Ascending aorta (tissue), 2 donors: ENCODE measurements at regions of chr6 and their contacts with region 1.

Region 1: GRCh38 chr6:12011276-12012076 is 636 bp upstream of the HIVEP1 start:
- DNase-seq: peak; percentile 91 to 99
- H3K4me3 ChIP-seq: peak overlapping the region; percentile 85 to 97
- H3K27ac ChIP-seq: peak overlapping the region; percentile 98 to 99
- H3K4me1 ChIP-seq: peaks cover 6 to 12% of the 10 kb centered on the region in 2 donors
- H3K27me3 ChIP-seq: no peaks in the 10 kb centered on the region
- CTCF ChIP-seq: no peak

Region 2: GRCh38 chr6:11537229-11538051 is 474.0 kb before region 1 on chr6 and contains the start of gene TMEM170B:
- intact Hi-C with region 1: loop called (anchors 5 kb)
- DNase-seq: peak; percentile 67 to 94
- H3K4me3 ChIP-seq: peak within 1 kb of the TSS; percentile 94 to 96
- H3K27ac ChIP-seq: peak within 1 kb of the TSS; percentile 64 to 82
- H3K4me1 ChIP-seq: peaks cover 0 to 4% of the 10 kb centered on the region in 2 donors
- H3K27me3 ChIP-seq: no peaks in the 10 kb centered on the region
- CTCF ChIP-seq: no peak
- total RNA-seq, gene TMEM170B: 0.53 TPM

Region 3: DNA sequence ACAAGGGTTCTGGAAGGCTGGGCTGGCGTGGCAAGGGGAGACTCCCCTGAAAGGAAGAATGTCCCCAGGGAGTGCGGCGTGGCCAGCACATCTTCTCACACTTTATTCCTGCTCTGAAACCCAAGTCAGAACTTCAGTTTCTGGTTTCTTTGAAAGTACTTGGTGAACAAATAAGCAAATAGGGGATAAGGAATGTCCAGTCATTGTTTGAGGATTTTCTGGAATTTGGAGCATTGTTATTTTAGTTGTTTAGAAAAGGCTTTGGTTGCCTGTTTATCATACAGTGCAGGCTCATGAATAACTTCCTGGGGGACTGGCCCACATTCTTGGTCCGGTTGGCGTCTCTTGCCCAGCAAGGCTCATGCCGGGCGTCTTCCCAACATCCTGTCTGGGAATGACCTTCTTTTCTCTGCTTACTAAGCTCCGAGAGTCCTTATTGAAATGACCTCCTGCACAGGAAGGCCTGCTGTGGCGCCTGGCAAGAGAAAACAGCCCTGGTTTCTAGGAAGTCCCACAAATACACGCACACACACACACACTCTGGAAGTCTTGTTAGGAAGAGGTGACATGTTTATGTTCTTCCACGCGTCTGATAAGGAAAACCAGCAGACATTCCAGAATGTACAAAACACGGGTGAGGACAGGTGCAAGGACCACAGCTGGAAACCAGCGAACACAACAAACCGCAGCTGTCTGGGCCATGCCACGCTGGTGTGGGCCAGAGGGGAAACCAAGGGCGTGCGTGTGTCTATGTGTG is 402.0 kb before region 1 on chr6:
- intact Hi-C with region 1: loop called (anchors 5 kb)
- DNase-seq: peak; percentile 25 to 90
- H3K4me3 ChIP-seq: peak overlapping the region in 1 of 2 donors; percentile 8
- H3K27ac ChIP-seq: peak overlapping the region; percentile 65 to 79
- H3K4me1 ChIP-seq: peaks cover 12 to 48% of the 10 kb centered on the region in 2 donors
- H3K27me3 ChIP-seq: no peaks in the 10 kb centered on the region
- CTCF ChIP-seq: no peak

Region 4: DNA sequence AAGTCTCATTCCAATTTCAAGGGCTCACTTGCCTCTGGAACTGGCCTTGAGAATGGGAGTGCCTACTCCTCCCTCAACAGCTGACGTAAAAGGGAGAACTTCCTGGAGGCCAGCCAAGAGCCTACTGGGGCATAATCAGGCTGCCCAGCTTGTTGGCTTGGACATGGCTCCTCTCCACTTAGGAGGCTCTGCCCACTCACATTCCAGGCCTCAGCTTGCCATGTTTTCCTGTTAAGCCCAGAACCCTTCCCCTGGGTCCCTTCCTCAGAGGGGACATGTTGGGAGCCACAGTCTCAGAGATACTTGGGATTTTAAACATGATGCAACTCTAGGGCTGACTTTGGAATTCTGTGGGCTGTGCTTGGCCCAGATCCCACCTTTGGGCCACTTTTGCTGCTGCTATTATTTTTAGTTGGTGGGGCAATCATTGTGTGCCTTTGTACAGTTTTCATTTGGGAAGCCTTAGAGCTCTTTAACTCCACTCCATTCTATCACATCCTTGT is 201.4 kb before region 1 on chr6:
- intact Hi-C with region 1: loop called (anchors 5 kb)
- DNase-seq: peak; percentile 15 to 91
- H3K4me3 ChIP-seq: no peak overlapping the region
- H3K27ac ChIP-seq: peak overlapping the region; percentile 66 to 74
- H3K4me1 ChIP-seq: peaks cover 0 to 11% of the 10 kb centered on the region in 2 donors
- H3K27me3 ChIP-seq: no peaks in the 10 kb centered on the region
- CTCF ChIP-seq: no peak

Region 5: GRCh38 chr6:12241493-12242175 is 230.2 kb after region 1 on chr6:
- intact Hi-C with region 1: no loop called
- DNase-seq: no peak
- H3K4me3 ChIP-seq: no peak overlapping the region
- H3K27ac ChIP-seq: no peak overlapping the region
- H3K4me1 ChIP-seq: no peaks in the 10 kb centered on the region
- H3K27me3 ChIP-seq: no peaks in the 10 kb centered on the region
- CTCF ChIP-seq: no peak

Region 6: DNA sequence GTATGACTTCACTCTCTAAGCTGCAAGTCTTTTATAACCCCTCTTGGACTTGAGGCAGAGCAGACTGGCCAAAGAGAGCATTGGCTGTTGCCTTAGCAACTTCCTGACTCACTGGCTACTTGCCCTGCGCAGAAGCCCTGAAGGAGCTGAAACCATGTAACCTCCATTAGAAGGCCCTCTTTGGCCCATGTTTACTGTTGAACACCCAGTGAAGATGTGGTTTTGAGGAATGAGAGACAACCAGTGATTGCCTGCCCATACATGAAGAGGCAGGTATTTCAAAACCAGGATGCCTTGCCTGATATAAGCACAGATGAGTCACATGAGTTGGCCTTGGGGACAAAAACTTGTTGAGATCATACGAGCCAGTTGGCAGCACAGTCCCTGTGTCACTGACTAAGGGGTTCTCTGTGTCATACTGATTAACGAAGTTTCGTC is 461.1 kb after region 1 on chr6:
- intact Hi-C with region 1: loop called (anchors 5 kb)
- DNase-seq: peak; percentile 58 to 94
- H3K4me3 ChIP-seq: no peak overlapping the region
- H3K27ac ChIP-seq: peak overlapping the region; percentile 79 to 85
- H3K4me1 ChIP-seq: peaks cover 9 to 30% of the 10 kb centered on the region in 2 donors
- H3K27me3 ChIP-seq: no peaks in the 10 kb centered on the region
- CTCF ChIP-seq: no peak